Activated CD4-positive, alpha-beta memory T cell treated with anti-CD3 and anti-CD28 coated beads for 36 hours (primary cell): ENCODE measurements at regions of chr14 and their contacts with region 1.

Region 1: GRCh38 chr14:94380225-94381148 is 7.9 kb downstream of the SERPINA1 start:
- DNase-seq: peak; percentile 56
- H3K4me3 Mint-ChIP-seq: no peak overlapping the region
- H3K27ac Mint-ChIP-seq: peak overlapping the region; percentile 74
- H3K4me1 Mint-ChIP-seq: peaks cover 33% of the 10 kb centered on the region
- H3K27me3 Mint-ChIP-seq: no peaks in the 10 kb centered on the region

Region 2: DNA sequence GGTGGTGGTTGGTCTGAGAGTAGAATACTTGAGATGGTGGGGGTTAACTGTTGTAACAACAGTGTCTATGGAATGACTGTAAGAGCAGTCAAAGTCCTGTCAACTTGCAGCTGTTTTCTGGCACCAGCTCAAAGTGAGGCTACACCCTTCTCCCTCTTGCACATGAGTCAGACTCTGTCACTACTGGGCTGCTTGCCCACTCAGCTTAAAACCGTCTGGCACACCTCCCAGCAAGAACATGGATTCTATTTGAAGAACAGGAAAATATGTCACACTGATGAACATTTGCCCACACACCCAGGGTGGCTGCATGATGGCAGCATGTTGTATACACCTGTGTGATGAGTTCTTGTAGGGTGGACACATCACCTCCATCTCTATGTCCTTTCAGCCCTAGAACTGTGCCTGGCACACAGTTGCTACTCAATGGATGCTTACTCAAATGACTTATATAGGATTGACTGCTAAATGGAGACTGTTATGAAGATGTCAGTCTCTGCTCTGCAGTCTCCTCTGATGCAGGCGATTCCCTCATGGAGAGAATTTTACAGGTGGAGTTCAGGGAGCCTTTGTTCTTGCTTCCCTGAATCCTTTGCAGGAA is 38.1 kb before region 1 on chr14:
- CTCF ChIA-PET with region 1: no interaction called
- POLR2A ChIA-PET with region 1: interaction called, 4 read pairs
- intact Hi-C with region 1: loop called (anchors 1 kb)
- DNase-seq: peak; percentile 80
- H3K4me3 Mint-ChIP-seq: no peak overlapping the region
- H3K27ac Mint-ChIP-seq: peak overlapping the region; percentile 80
- H3K4me1 Mint-ChIP-seq: peaks cover 78% of the 10 kb centered on the region
- H3K27me3 Mint-ChIP-seq: no peaks in the 10 kb centered on the region

Region 3: DNA sequence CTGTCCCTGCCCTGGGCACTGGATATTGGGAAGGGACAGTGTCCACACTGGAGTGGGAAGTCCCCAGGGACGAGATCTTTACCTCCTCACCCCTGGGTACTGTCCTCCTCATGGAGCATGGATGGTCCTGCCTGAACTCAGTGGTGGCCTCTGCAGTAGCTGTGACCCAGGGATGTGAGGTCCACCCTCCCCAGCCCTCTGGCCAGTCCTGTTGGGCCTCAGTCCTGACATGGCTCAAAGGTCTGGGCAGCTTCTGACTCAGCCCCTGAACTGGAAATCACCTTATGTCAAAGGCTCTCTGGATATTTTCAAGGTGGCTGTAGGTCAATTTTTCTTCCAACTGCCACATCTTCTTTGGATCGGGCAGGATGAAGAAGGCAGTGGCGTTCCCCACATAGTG is 16.4 kb before region 1 on chr14:
- CTCF ChIA-PET with region 1: interaction called, 3 read pairs
- POLR2A ChIA-PET with region 1: no interaction called
- intact Hi-C with region 1: loop called (anchors 2 kb)
- DNase-seq: no peak
- H3K4me3 Mint-ChIP-seq: no peak overlapping the region
- H3K27ac Mint-ChIP-seq: no peak overlapping the region
- H3K4me1 Mint-ChIP-seq: no peaks in the 10 kb centered on the region
- H3K27me3 Mint-ChIP-seq: peaks cover 14% of the 10 kb centered on the region